ENCODE measurements at regions of chr1 and their contacts with region 1.

Region 1: DNA sequence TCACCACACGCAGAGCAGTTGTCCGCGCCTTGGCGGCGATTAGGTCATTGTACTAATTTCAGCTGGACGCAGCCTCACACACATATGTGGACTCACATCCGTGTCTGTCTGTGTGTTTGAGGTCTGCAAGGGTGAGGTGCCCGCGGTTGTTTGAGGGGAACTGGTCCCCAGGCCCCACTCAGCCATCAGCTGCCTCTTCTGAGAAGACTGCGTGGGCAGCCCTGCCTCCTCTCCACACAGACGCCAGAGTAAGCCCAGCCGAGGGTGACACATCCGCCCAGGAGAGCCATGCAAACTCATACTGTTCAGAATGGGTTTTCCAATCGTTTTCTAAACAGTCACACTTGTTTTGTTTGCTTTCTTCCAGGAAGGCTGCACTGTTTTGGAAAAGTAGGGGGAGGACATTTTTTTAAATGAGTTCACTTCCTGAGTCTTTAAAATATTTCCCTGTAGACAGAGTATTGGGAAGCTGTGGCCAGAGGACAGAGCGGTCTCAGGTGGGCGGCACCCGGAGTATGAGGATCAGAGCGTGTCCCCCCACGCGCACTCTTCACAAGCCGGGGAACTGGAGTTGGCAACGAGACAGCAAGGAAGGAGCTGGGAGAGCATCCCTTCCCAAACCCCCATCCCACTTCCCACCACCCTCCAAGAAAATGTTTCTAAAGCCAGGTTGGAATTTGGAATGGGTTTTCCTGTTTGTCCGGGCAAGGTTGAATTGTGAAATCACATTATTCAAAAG is 53.3 kb downstream of the TOMM20 start:
- DNase-seq: peak in 4 of 5 donors; percentile 57 to 93 (median 82)
- H3K4me3 ChIP-seq: peak overlapping the region in 1 of 3 donors; percentile 11
- H3K27ac ChIP-seq: peak overlapping the region; percentile 84 to 97
- H3K4me1 ChIP-seq: peaks cover 16 to 71% (median 60%) of the 10 kb centered on the region in 3 donors
- H3K27me3 ChIP-seq: no peaks in the 10 kb centered on the region
- CTCF ChIP-seq: no peak

Region 2: DNA sequence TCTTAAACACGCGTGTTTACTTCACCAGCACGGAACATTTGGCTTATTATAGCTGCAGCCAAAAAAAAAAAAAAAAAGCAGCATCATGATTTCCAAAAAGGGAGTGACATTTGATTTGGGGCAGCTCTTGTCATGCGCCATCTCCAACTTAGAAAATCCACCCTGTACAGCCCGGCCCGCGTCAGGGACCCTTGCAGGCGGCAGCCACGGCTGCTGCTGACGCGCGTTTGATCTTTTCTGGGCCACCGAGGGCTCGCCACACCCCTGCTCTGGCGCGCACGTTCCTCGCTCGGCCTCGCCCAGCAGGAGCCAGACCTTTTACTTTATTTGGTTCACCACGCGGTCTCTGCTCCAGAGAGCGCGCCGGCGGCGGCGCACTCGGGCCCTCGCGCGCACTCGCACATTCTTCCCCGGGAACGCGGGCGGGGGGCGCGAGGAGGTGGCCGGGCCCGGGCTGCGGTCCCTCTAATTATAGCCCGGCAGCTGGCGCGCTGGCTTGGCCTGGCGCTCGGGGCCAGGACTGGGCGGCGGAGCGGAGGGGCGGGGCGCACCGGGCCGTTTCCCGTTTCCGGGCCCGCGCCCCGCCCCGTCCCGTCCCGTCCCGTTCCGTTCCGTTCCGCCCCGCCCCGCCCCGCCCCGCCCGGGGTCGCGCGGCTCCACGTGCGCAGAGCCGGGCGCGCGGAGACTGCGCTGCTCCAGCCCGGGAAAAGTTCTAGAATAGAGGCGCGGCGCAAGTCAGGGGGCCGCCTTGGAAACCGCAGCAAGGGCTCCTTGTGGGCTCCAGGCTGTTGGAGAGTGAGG is 475.5 kb before region 1 on chr1:
- intact Hi-C with region 1: loop called (anchors 10 kb)
- DNase-seq: peak; percentile 90 to 96 (median 93)
- H3K4me3 ChIP-seq: peak overlapping the region; percentile 50 to 63 (median 60)
- H3K27ac ChIP-seq: peak overlapping the region; percentile 100
- H3K4me1 ChIP-seq: peaks cover 21 to 27% (median 22%) of the 10 kb centered on the region in 3 donors
- H3K27me3 ChIP-seq: no peaks in the 10 kb centered on the region
- CTCF ChIP-seq: peak; percentile 6

Region 3: GRCh38 chr1:234918181-234918841 is 157.0 kb before region 1 on chr1:
- intact Hi-C with region 1: loop called (anchors 5 kb)
- DNase-seq: peak in 4 of 5 donors; percentile 88 to 93 (median 90)
- H3K4me3 ChIP-seq: no peak overlapping the region
- H3K27ac ChIP-seq: peak overlapping the region; percentile 83 to 86
- H3K4me1 ChIP-seq: peaks cover 5 to 33% (median 30%) of the 10 kb centered on the region in 3 donors
- H3K27me3 ChIP-seq: no peaks in the 10 kb centered on the region
- CTCF ChIP-seq: no peak

Region 4: GRCh38 chr1:234978397-234979295 is 96.7 kb before region 1 on chr1:
- intact Hi-C with region 1: loop called (anchors 10 kb)
- DNase-seq: peak in 2 of 5 donors; percentile 59 to 60
- H3K4me3 ChIP-seq: no peak overlapping the region
- H3K27ac ChIP-seq: peak overlapping the region; percentile 89 to 90
- H3K4me1 ChIP-seq: peaks cover 14 to 73% (median 44%) of the 10 kb centered on the region in 3 donors
- H3K27me3 ChIP-seq: no peaks in the 10 kb centered on the region
- CTCF ChIP-seq: peak; percentile 6

Region 5: GRCh38 chr1:235979716-235980333 is 904.5 kb after region 1 on chr1:
- intact Hi-C with region 1: no loop called
- DNase-seq: no peak
- H3K4me3 ChIP-seq: no peak overlapping the region
- H3K27ac ChIP-seq: no peak overlapping the region
- H3K4me1 ChIP-seq: peaks cover 0 to 4% (median 0%) of the 10 kb centered on the region in 3 donors
- H3K27me3 ChIP-seq: no peaks in the 10 kb centered on the region
- CTCF ChIP-seq: no peak